ENCODE measurements at regions of chr2 and their contacts with region 1.

Region 1: GRCh38 chr2:84846041-84846663 is 34.7 kb downstream of the TRABD2A start:
- DNase-seq: no peak
- H3K4me3 ChIP-seq: no peak overlapping the region
- H3K27ac ChIP-seq: peak overlapping the region; percentile 1
- H3K4me1 ChIP-seq: peaks cover 46% of the 10 kb centered on the region
- H3K27me3 ChIP-seq: no peaks in the 10 kb centered on the region
- CTCF ChIP-seq: no peak

Region 2: DNA sequence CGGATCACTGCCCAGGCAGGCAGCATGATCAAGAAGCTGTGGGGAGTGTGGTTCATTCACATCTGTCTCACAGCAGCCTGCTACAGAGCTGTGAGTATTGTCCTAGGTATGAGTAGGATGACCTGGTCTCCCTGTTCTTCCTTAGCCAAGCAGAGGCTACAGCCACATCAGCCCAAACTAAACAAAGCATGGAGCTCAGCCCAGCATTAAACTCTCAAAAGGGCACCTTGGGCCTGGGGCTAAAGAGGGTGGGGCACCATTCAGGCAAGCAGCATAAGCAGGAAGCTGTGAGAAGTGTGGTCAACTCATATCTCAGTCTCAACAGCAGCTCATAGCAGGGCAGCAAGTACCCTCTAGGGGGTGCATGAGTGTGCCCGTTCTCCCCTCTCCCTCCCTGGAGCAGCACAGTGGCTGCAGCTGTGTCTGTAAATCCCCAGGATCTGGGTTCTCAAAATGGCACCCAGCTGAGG is 104.8 kb before region 1 on chr2:
- CTCF ChIA-PET with region 1: no interaction called
- dilution Hi-C with region 1: no loop called
- in situ Hi-C with region 1: no loop called
- intact Hi-C with region 1: loop called (anchors 10 kb)
- DNase-seq: peak; percentile 32
- H3K4me3 ChIP-seq: no peak overlapping the region
- H3K27ac ChIP-seq: no peak overlapping the region
- H3K4me1 ChIP-seq: no peaks in the 10 kb centered on the region
- H3K27me3 ChIP-seq: no peaks in the 10 kb centered on the region
- CTCF ChIP-seq: peak; percentile 3 to 29

Region 3: GRCh38 chr2:84781942-84782716 is 64.0 kb before region 1 on chr2:
- CTCF ChIA-PET with region 1: no interaction called
- dilution Hi-C with region 1: loop called (anchors 10 kb)
- in situ Hi-C with region 1: no loop called
- intact Hi-C with region 1: no loop called
- DNase-seq: peak; percentile 74
- H3K4me3 ChIP-seq: no peak overlapping the region
- H3K27ac ChIP-seq: peak overlapping the region; percentile 36
- H3K4me1 ChIP-seq: peaks cover 11% of the 10 kb centered on the region
- H3K27me3 ChIP-seq: no peaks in the 10 kb centered on the region
- CTCF ChIP-seq: no peak

Region 4: GRCh38 chr2:84880645-84881521 is 34.7 kb after region 1 on chr2 and contains the start of gene TRABD2A:
- CTCF ChIA-PET with region 1: no interaction called
- dilution Hi-C with region 1: no loop called
- in situ Hi-C with region 1: no loop called
- intact Hi-C with region 1: no loop called
- DNase-seq: peak; percentile 21
- H3K4me3 ChIP-seq: peak within 1 kb of the TSS; percentile 62 to 66 (median 62)
- H3K27ac ChIP-seq: peak within 1 kb of the TSS; percentile 10
- H3K4me1 ChIP-seq: peaks cover 13% of the 10 kb centered on the region
- H3K27me3 ChIP-seq: no peaks in the 10 kb centered on the region
- CTCF ChIP-seq: no peak
- total RNA-seq, gene TRABD2A: 9.7 to 20.7 TPM

Region 5: DNA sequence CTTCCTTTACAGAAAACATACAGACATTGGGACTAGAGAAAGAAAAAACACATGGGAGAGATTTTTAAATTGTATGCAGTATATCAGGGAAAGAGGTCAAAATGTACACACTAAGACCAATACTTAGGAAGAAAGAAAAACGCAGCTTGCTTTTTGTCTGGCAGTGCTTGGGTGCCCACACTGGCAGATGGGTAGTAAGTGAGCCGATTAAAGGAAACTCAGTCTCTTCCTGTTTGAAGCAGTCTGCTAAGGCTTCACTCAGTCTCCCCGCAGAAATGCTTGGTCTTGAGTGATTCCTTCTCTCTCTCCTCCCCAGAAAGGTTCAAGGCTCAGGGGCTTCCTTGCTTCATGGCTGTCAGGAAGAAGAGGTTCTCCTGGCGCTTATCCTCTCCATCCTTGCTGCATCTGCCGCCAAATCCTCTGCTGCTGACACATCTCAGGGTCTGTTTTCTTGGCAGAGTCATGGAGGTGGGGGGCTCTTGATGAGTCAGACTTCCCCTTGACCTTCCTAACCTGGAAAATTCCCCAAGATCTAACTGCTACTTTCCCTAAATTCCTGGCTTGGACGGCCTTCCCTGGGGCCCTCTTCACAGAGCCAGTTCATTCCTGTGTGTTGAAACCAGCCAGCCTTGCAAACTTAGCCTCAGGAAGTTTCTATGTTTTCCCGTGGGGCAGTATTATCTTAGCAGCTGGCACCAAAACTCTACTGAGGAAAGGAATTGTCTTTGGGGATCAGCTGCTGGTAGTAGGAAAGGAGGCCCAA is 48.8 kb after region 1 on chr2:
- CTCF ChIA-PET with region 1: no interaction called
- dilution Hi-C with region 1: loop called (anchors 5 kb)
- in situ Hi-C with region 1: no loop called
- intact Hi-C with region 1: no loop called
- DNase-seq: peak; percentile 31
- H3K4me3 ChIP-seq: no peak overlapping the region
- H3K27ac ChIP-seq: peak overlapping the region; percentile 40
- H3K4me1 ChIP-seq: peaks cover 41% of the 10 kb centered on the region
- H3K27me3 ChIP-seq: no peaks in the 10 kb centered on the region
- CTCF ChIP-seq: no peak